ENCODE measurements at regions of chr18 and their contacts with region 1.

Region 1: DNA sequence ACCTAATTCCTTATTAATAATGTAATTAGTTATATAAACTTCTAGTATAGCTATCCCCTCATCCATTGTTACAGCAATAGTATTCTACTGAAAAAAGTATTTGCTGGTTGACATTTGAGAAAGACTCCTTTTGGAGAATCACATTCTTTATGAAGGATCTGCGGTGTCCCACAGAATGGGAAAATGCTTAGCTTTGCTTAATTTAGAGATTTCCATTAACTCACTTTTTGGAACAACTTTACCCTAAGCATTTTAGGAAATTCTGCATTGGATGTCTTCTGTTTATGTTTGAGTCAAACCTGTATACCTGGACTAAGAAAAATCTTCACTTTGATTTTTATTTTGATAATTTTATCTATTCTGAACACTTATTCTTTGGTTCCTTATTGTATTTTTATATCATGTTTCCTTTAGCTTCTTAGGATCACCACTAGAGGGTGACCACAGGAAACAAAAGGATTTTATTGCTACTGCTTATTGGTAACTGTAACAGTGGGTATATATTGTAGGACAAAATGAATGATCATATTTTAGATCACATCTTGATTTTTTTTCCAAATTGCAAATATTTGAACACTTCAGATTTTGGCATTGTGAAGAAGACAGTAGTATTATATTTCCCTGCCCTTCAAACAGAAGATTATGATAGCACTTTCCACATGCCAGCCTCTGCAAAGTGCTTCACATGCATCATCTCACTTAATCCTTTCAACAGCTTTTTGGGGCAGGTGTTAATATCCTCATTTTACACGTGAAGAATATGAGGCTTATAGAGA is 79.6 kb downstream of the MIB1 start:
- DNase-seq: no peak
- H3K4me3 ChIP-seq: no peak overlapping the region
- CTCF ChIP-seq: peak; percentile 27

Region 2: GRCh38 chr18:21509062-21509461 is 311.2 kb before region 1 on chr18:
- CTCF ChIA-PET with region 1: no interaction called
- POLR2A ChIA-PET with region 1: no interaction called
- DNase-seq: no peak
- H3K4me3 ChIP-seq: no peak overlapping the region
- CTCF ChIP-seq: no peak

Region 3: GRCh38 chr18:21831413-21831831 is 11.2 kb after region 1 on chr18:
- CTCF ChIA-PET with region 1: interaction called, 18 read pairs
- POLR2A ChIA-PET with region 1: no interaction called
- DNase-seq: no peak
- H3K4me3 ChIP-seq: no peak overlapping the region
- CTCF ChIP-seq: no peak

Region 4: GRCh38 chr18:22250591-22250996 is 430.4 kb after region 1 on chr18:
- CTCF ChIA-PET with region 1: no interaction called
- POLR2A ChIA-PET with region 1: no interaction called
- DNase-seq: no peak
- H3K4me3 ChIP-seq: no peak overlapping the region
- CTCF ChIP-seq: no peak